Left cardiac atrium (tissue), 4 donors: ENCODE measurements at regions of chr12 and their contacts with region 1.

Region 1: GRCh38 chr12:5140190-5140589 is 96.5 kb downstream of the KCNA5 start:
- DNase-seq: no peak
- ATAC-seq: no peak

Region 2: DNA sequence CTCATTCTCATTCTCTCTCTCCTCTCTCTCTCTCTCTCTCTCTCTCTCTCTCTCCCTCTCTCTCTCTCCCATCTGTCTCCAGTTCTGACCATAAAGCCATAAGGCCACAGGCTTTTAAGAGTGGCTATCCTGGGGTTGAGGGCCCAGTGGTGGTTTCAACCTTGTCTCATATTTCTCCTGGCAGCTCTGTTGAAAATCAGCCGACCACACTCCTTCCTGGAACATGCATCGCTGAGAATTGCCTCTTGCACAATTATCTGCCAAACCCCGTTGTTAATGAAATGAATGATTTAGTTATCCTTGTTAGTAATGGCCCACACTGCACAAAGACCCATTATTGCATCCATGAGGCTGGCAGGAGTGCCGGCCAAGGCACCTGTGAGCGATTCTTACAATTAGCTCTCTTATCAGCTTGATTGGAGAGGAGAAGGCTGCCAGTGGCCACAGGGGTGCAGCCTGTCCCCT is 126.9 kb before region 1 on chr12:
- intact Hi-C with region 1: no loop called
- DNase-seq: no peak
- ATAC-seq: peak in 1 of 2 donors; percentile 39

Region 3: GRCh38 chr12:5442251-5443006 is 302.2 kb after region 1 on chr12:
- intact Hi-C with region 1: no loop called
- DNase-seq: no peak
- ATAC-seq: peak; percentile 74 to 85

Region 4: GRCh38 chr12:5789469-5789968 is 649.3 kb after region 1 on chr12:
- intact Hi-C with region 1: loop called in 1 of 2 experiments (anchors 10 kb)
- DNase-seq: no peak
- ATAC-seq: no peak